ENCODE measurements at regions of chr15 and their contacts with region 1.

Region 1: DNA sequence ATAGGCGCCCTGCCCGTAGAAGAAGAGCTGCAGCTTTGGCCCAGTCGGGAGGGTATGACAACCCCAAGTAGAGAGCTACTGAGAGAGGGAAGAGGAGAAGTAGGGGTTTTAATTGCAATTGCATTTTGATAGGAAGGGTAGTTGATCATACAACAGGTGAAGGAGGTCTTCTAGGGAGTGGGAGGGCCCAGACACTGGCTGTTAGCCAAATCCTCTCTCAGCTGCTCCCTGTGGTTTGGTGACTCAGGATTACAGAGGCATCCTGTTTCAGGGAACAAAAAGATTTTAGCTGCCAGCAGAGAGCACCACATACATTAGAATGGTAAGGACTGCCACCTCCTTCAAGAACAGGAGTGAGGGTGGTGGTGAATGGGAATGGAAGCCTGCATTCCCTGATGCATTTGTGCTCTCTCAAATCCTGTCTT is 408.9 kb upstream of the THBS1 start:
- DNase-seq: peak; percentile 99
- H3K4me3 ChIP-seq: no peak overlapping the region
- H3K27ac ChIP-seq: peak overlapping the region; percentile 87
- H3K4me1 ChIP-seq: peaks cover 17% of the 10 kb centered on the region
- H3K27me3 ChIP-seq: no peaks in the 10 kb centered on the region
- CTCF ChIP-seq: peak; percentile 41 to 62
- POLR2A ChIP-seq: peak; percentile 30

Region 2: GRCh38 chr15:38817427-38818156 is 354.4 kb before region 1 on chr15:
- CTCF ChIA-PET with region 1: interaction called, 5 read pairs
- POLR2A ChIA-PET with region 1: no interaction called
- dilution Hi-C with region 1: no loop called
- intact Hi-C with region 1: loop called (anchors 1 kb)
- DNase-seq: peak; percentile 86
- H3K4me3 ChIP-seq: no peak overlapping the region
- H3K27ac ChIP-seq: peak overlapping the region; percentile 36
- H3K4me1 ChIP-seq: peaks cover 17% of the 10 kb centered on the region
- H3K27me3 ChIP-seq: no peaks in the 10 kb centered on the region
- CTCF ChIP-seq: peak; percentile 98 to 99
- POLR2A ChIP-seq: no peak

Region 3: DNA sequence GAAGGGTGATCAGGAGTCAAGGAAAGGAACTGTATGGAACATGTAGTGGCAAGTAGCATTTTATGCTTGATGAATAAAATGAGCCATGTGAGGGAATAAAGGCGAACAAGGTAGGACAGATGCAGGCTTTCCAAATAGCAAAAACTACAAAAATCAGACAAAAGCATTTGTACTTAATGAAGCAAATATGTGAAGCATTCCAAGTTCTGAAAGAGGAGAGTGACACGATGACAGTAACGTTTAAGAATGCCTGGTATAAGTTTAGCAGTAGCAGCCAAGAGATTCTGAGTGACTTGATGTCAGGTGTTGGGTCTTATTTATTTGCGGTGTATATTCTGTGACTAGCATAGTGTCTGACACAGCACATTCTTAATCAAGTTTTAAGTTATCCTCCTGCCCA is 199.1 kb before region 1 on chr15:
- CTCF ChIA-PET with region 1: no interaction called
- POLR2A ChIA-PET with region 1: no interaction called
- dilution Hi-C with region 1: no loop called
- intact Hi-C with region 1: no loop called
- DNase-seq: no peak
- H3K4me3 ChIP-seq: no peak overlapping the region
- H3K27ac ChIP-seq: no peak overlapping the region
- H3K4me1 ChIP-seq: no peaks in the 10 kb centered on the region
- H3K27me3 ChIP-seq: no peaks in the 10 kb centered on the region
- CTCF ChIP-seq: no peak
- POLR2A ChIP-seq: no peak

Region 4: DNA sequence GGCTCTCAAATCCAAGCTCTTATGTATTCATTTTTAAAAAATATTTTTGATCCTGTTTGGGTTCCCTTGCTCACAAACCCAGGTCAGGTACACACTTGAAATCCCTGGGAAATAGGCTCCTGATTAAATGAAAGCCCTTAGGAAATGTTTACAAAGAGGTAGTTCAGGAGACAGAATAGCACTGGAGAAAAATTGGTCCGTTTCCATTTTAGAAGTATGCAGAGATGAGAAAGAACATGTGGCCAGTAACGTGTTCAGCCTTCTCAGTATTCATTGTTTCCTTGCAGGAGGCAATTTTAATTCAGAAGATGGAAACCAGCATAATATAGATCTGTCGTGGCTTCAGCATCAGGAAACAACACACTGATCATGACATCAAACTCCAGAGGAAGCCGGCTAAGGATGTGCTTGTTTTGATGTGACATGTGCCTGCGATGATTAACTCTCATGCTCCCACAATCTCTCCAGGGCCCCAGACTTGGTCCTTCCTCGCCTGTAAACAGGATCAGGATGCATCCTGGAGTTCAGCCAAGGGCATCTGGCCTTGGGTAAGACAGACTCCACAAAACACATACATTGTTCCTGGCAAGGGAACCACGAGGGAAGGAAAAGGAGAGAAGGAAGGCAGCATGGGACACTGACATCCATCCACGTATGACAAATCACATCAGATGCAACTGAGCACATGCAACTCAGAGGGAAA is 58.4 kb after region 1 on chr15:
- CTCF ChIA-PET with region 1: interaction called, 3 read pairs
- POLR2A ChIA-PET with region 1: no interaction called
- dilution Hi-C with region 1: no loop called
- intact Hi-C with region 1: loop called (anchors 1 kb)
- DNase-seq: peak; percentile 100
- H3K4me3 ChIP-seq: no peak overlapping the region
- H3K27ac ChIP-seq: peak overlapping the region; percentile 93
- H3K4me1 ChIP-seq: peaks cover 49% of the 10 kb centered on the region
- H3K27me3 ChIP-seq: no peaks in the 10 kb centered on the region
- CTCF ChIP-seq: no peak
- POLR2A ChIP-seq: no peak

Region 5: DNA sequence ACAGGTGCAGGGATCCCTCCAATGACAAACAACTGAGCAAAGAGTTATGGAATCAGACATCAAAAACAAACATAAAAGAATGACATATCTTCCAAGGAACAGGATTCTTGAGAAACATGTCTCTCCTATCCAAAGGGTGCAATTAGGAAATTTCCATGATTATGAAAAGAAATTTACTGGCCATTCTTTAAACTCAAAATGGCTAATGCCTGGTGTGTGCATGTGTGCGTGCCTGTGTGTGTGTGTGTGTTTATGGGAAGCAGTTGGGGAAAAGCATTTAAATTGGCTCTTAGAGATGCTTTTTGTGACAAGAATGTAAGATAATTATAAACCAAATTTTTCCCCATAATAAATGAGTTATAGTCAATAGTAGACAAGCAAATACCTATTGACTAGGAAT is 88.4 kb after region 1 on chr15:
- CTCF ChIA-PET with region 1: interaction called, 9 read pairs
- POLR2A ChIA-PET with region 1: interaction called, 7 read pairs
- dilution Hi-C with region 1: no loop called
- intact Hi-C with region 1: loop called (anchors 1 kb)
- DNase-seq: no peak
- H3K4me3 ChIP-seq: no peak overlapping the region
- H3K27ac ChIP-seq: peak overlapping the region; percentile 95
- H3K4me1 ChIP-seq: peaks cover 32% of the 10 kb centered on the region
- H3K27me3 ChIP-seq: no peaks in the 10 kb centered on the region
- CTCF ChIP-seq: no peak
- POLR2A ChIP-seq: no peak

Region 6: DNA sequence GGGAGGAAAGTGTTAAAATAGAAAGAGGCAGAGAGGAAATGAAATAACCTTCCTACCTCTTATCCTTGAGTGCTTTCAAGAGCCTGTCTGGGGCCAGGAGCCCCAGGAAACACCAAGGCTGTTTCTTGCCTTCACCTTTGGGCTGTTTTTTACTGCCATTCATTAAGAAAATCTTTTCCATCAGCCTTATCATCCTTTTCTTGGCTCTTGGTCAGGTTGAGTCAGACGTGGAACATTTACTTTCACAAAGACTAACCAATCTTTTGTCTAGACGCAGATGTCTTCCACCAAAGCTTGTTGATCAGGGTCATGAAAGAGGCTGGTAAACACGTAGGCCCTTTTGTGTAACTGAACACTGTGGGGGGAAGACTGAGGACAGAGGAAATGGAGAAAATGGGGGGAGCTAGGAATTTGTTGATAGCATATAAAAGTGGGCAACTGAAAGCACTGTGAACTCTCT is 258.0 kb after region 1 on chr15:
- CTCF ChIA-PET with region 1: interaction called, 4 read pairs
- POLR2A ChIA-PET with region 1: no interaction called
- dilution Hi-C with region 1: no loop called
- intact Hi-C with region 1: loop called (anchors 1 kb)
- DNase-seq: peak; percentile 99
- H3K4me3 ChIP-seq: no peak overlapping the region
- H3K27ac ChIP-seq: peak overlapping the region; percentile 98
- H3K4me1 ChIP-seq: peaks cover 52% of the 10 kb centered on the region
- H3K27me3 ChIP-seq: no peaks in the 10 kb centered on the region
- CTCF ChIP-seq: no peak
- POLR2A ChIP-seq: peak; percentile 75

Region 7: DNA sequence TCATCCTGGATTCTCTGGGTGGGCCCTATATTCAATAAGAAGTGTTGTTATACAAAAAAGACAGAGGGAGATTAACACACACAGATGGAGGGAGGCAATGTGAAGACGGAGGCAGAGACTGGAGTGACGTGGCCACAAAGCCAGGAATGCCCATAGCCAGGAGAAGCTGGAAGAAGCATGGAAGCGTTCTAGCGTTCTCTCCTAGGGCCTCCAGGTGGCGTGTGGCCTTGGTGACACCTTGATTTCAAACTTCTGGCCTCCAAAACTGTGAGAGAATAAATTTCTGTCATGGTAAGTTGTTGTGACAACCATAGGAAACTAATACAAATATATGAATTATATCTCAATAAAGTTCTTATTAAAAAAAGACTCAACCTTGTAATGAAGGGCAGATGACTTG is 430.2 kb after region 1 on chr15:
- CTCF ChIA-PET with region 1: interaction called, 3 read pairs
- POLR2A ChIA-PET with region 1: no interaction called
- dilution Hi-C with region 1: no loop called
- intact Hi-C with region 1: loop called (anchors 1 kb)
- DNase-seq: no peak
- H3K4me3 ChIP-seq: no peak overlapping the region
- H3K27ac ChIP-seq: no peak overlapping the region
- H3K4me1 ChIP-seq: peaks cover 7% of the 10 kb centered on the region
- H3K27me3 ChIP-seq: no peaks in the 10 kb centered on the region
- CTCF ChIP-seq: peak; percentile 24 to 31
- POLR2A ChIP-seq: no peak

Region 8: DNA sequence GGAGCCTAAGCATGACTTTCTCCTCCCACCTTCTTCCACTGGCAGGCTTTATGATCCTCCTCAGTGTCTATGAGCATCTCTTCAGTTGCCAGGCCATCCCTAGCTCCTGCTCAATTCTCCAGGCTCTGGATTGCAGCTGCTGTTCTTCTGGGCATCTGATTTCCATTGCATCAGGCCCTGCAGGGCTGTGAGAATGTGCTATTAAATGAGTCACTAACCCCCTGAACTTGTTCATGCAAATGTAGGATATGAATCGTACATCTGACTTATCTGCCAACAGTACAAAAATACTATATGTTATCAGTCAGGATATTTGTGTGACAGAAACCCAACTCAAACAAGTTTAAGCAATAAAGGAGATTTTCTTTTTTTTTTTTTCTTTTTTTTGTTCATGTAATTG is 736.2 kb after region 1 on chr15:
- CTCF ChIA-PET with region 1: no interaction called
- POLR2A ChIA-PET with region 1: no interaction called
- dilution Hi-C with region 1: no loop called
- intact Hi-C with region 1: no loop called
- DNase-seq: peak; percentile 82
- H3K4me3 ChIP-seq: no peak overlapping the region
- H3K27ac ChIP-seq: peak overlapping the region; percentile 35
- H3K4me1 ChIP-seq: peaks cover 20% of the 10 kb centered on the region
- H3K27me3 ChIP-seq: no peaks in the 10 kb centered on the region
- CTCF ChIP-seq: no peak
- POLR2A ChIP-seq: no peak